Activated CD4-positive, alpha-beta memory T cell treated with anti-CD3 and anti-CD28 coated beads for 36 hours (primary cell): ENCODE measurements at regions of chr18 and their contacts with region 1.

Region 1: GRCh38 chr18:54776282-54776977 is 51.8 kb upstream of the RAB27B start:
- DNase-seq: peak; percentile 62
- H3K4me3 Mint-ChIP-seq: no peak overlapping the region
- H3K27ac Mint-ChIP-seq: no peak overlapping the region
- H3K4me1 Mint-ChIP-seq: peaks cover 10% of the 10 kb centered on the region
- H3K27me3 Mint-ChIP-seq: no peaks in the 10 kb centered on the region

Region 2: GRCh38 chr18:54712306-54712705 is 64.1 kb before region 1 on chr18:
- CTCF ChIA-PET with region 1: no interaction called
- POLR2A ChIA-PET with region 1: no interaction called
- intact Hi-C with region 1: loop called (anchors 1 kb)
- DNase-seq: peak; percentile 40
- H3K4me3 Mint-ChIP-seq: no peak overlapping the region
- H3K27ac Mint-ChIP-seq: no peak overlapping the region
- H3K4me1 Mint-ChIP-seq: peaks cover 29% of the 10 kb centered on the region
- H3K27me3 Mint-ChIP-seq: peaks cover 5% of the 10 kb centered on the region

Region 3: GRCh38 chr18:54737986-54738385 is 38.4 kb before region 1 on chr18:
- CTCF ChIA-PET with region 1: no interaction called
- POLR2A ChIA-PET with region 1: no interaction called
- intact Hi-C with region 1: loop called (anchors 5 kb)
- DNase-seq: no peak
- H3K4me3 Mint-ChIP-seq: no peak overlapping the region
- H3K27ac Mint-ChIP-seq: no peak overlapping the region
- H3K4me1 Mint-ChIP-seq: no peaks in the 10 kb centered on the region
- H3K27me3 Mint-ChIP-seq: peaks cover 2% of the 10 kb centered on the region

Region 4: DNA sequence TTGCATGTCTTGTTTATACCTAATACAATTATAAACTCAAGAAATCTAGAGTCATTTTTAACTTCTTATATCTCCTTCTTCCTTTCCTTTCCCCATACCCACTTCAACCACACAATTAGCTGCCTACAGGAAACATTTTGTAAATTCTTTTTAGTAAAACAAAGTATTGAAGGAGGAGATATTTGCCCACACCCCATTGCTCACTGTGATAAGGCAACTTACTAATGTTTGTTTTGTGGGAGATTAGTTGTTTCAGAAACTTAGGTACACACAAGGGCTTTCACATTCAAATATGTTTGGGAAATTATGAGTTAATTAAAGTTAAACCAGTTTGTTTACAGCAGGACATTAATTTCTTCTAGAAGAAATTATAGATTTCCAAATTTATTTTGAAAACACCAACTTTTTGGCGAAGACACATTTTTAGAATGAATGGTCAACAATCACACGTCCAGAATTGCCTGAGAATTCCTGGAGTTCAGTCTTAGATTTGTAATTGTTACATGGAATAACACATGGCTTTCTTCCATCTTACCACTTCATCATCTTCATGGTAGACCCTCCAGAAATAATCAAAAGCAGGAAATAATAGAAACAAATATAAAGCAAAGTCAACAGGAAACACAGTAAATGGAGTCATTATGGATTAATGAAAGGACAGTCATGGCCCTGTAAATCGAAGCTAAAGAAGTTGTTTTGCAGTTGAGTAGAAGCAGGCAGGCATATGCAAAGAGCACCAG is 10.6 kb before region 1 on chr18:
- CTCF ChIA-PET with region 1: no interaction called
- POLR2A ChIA-PET with region 1: no interaction called
- intact Hi-C with region 1: no loop called
- DNase-seq: no peak
- H3K4me3 Mint-ChIP-seq: no peak overlapping the region
- H3K27ac Mint-ChIP-seq: no peak overlapping the region
- H3K4me1 Mint-ChIP-seq: no peaks in the 10 kb centered on the region
- H3K27me3 Mint-ChIP-seq: peaks cover 6% of the 10 kb centered on the region

Region 5: DNA sequence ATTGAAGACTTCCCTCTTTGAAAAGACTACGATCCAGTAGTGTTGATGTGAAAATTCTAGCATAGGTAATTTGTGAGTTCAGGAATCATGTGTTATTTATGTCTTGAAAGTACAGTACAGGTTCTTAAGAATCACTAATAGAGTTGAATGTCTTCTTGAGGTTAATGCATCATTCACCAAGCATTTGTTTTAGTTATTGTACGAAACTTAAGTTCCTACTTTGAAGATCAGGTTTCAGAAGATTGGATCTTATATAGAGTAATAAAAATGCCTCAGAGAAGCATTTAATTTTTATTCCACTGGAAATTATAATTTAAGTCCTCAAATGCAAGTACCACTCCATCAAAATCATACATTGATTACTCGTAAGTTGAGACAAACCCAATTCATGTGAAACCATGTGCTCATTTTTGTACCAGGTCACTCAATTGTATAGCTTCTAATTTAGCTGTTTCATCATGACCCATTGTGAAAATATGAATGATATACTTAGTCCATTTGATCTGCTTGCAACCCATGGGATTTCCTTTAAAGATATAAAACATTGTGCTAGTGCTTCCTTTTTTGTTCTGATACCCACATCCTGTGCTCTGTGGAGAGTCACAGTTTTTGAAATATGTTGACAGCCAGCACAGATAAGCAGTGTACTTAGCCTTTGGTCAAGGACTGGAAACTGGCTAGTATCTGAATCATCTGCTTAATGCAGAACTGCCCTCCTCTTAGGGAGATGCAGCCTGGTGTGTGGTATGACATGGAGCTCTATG is 29.3 kb after region 1 on chr18:
- CTCF ChIA-PET with region 1: no interaction called
- POLR2A ChIA-PET with region 1: no interaction called
- intact Hi-C with region 1: loop called (anchors 2 kb)
- DNase-seq: no peak
- H3K4me3 Mint-ChIP-seq: no peak overlapping the region
- H3K27ac Mint-ChIP-seq: no peak overlapping the region
- H3K4me1 Mint-ChIP-seq: peaks cover 13% of the 10 kb centered on the region
- H3K27me3 Mint-ChIP-seq: no peaks in the 10 kb centered on the region

Region 6: GRCh38 chr18:54845787-54846186 is 69.4 kb after region 1 on chr18:
- CTCF ChIA-PET with region 1: no interaction called
- POLR2A ChIA-PET with region 1: no interaction called
- intact Hi-C with region 1: loop called (anchors 5 kb)
- DNase-seq: no peak
- H3K4me3 Mint-ChIP-seq: no peak overlapping the region
- H3K27ac Mint-ChIP-seq: no peak overlapping the region
- H3K4me1 Mint-ChIP-seq: no peaks in the 10 kb centered on the region
- H3K27me3 Mint-ChIP-seq: no peaks in the 10 kb centered on the region